ENCODE measurements at regions of chr11 and their contacts with region 1.

Region 1: GRCh38 chr11:65134386-65135253 is at the start of gene SYVN1:
- DNase-seq: peak; percentile 96 to 98 (median 98)
- H3K4me3 ChIP-seq: peak within 1 kb of the TSS; percentile 81 to 97 (median 89)
- H3K27ac ChIP-seq: peak within 1 kb of the TSS; percentile 100
- H3K4me1 ChIP-seq: peaks cover 8 to 40% (median 34%) of the 10 kb centered on the region in 4 experiments
- H3K27me3 ChIP-seq: no peaks in the 10 kb centered on the region

Region 2: GRCh38 chr11:64826578-64827450 is 307.8 kb before region 1 on chr11:
- CTCF ChIA-PET with region 1: no interaction called
- POLR2A ChIA-PET with region 1: no interaction called
- DNase-seq: no peak
- H3K4me3 ChIP-seq: no peak overlapping the region
- H3K27ac ChIP-seq: no peak overlapping the region
- H3K4me1 ChIP-seq: no peaks in the 10 kb centered on the region
- H3K27me3 ChIP-seq: no peaks in the 10 kb centered on the region

Region 3: GRCh38 chr11:65111744-65112414 is 22.7 kb before region 1 on chr11 and contains the start of gene TM7SF2:
- CTCF ChIA-PET with region 1: interaction called, 14 read pairs
- POLR2A ChIA-PET with region 1: interaction called, 26 read pairs
- DNase-seq: peak; percentile 91 to 95 (median 94)
- H3K4me3 ChIP-seq: peak within 1 kb of the TSS; percentile 52 to 80 (median 74)
- H3K27ac ChIP-seq: peak within 1 kb of the TSS in 1 of 2 experiments; percentile 61
- H3K4me1 ChIP-seq: peaks cover 0 to 51% (median 40%) of the 10 kb centered on the region in 4 experiments
- H3K27me3 ChIP-seq: no peaks in the 10 kb centered on the region

Region 4: GRCh38 chr11:65117216-65118096 is 17.2 kb before region 1 on chr11 and contains the start of gene ZNHIT2:
- CTCF ChIA-PET with region 1: interaction called, 15 read pairs
- POLR2A ChIA-PET with region 1: interaction called, 37 read pairs
- DNase-seq: peak; percentile 99 to 100 (median 99)
- H3K4me3 ChIP-seq: peak within 1 kb of the TSS; percentile 50 to 90 (median 88)
- H3K27ac ChIP-seq: peak within 1 kb of the TSS; percentile 68 to 86
- H3K4me1 ChIP-seq: peaks cover 6 to 52% (median 36%) of the 10 kb centered on the region in 4 experiments
- H3K27me3 ChIP-seq: no peaks in the 10 kb centered on the region

Region 5: DNA sequence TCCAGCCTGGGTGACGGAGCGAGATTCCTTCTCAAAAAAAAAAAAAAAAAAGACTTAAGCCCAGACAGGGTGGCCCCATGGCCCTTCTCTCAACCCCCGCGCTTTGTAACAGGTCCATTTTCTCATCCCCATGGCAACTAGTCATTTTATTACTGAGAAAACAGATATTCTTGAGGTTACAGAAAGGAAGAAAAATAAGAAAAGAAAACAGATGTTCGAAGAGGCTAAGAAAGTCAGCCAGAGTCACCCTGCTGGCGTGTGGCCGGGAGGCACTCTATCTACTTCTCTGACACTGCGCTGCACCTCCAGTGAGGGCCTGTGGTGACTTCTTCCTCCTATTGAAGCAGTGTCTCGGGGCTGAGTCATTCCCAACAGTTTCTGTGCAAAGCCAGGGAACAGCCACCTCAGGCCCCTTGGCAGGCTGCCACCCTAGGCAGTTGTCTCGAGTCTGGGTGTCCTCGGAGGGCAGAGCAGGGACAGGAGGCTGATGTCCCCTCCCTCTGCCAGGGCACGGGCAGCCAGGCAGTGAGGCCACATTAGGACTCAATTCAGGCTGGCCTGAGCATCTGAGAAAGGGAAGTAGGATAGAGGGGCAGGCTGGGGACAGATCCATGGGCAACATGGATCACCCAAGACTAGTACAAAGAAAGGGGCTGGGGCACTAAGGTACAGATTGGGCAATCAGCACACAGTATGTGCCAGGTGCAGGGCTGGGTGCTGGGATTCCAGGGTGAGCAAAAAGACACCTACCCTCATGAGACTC is 16.1 kb after region 1 on chr11:
- CTCF ChIA-PET with region 1: interaction called, 55 read pairs
- POLR2A ChIA-PET with region 1: interaction called, 26 read pairs
- DNase-seq: peak; percentile 97 to 99 (median 99)
- H3K4me3 ChIP-seq: peak overlapping the region in 5 of 7 experiments; percentile 5 to 59 (median 45)
- H3K27ac ChIP-seq: peak overlapping the region; percentile 80 to 90
- H3K4me1 ChIP-seq: peaks cover 13 to 46% (median 44%) of the 10 kb centered on the region in 4 experiments
- H3K27me3 ChIP-seq: no peaks in the 10 kb centered on the region

Region 6: GRCh38 chr11:65169164-65169641 is 34.6 kb after region 1 on chr11:
- CTCF ChIA-PET with region 1: interaction called, 25 read pairs
- POLR2A ChIA-PET with region 1: interaction called, 22 read pairs
- DNase-seq: peak; percentile 40 to 91 (median 63)
- H3K4me3 ChIP-seq: no peak overlapping the region
- H3K27ac ChIP-seq: peak overlapping the region in 1 of 2 experiments; percentile 84
- H3K4me1 ChIP-seq: peaks cover 1 to 24% (median 13%) of the 10 kb centered on the region in 4 experiments
- H3K27me3 ChIP-seq: no peaks in the 10 kb centered on the region

Region 7: GRCh38 chr11:65180877-65181568 is 46.4 kb after region 1 on chr11:
- CTCF ChIA-PET with region 1: interaction called, 31 read pairs
- POLR2A ChIA-PET with region 1: interaction called, 44 read pairs
- DNase-seq: peak; percentile 83 to 91 (median 88)
- H3K4me3 ChIP-seq: peak overlapping the region; percentile 28 to 96 (median 81)
- H3K27ac ChIP-seq: peak overlapping the region; percentile 15 to 74
- H3K4me1 ChIP-seq: peaks cover 0 to 28% (median 22%) of the 10 kb centered on the region in 4 experiments
- H3K27me3 ChIP-seq: no peaks in the 10 kb centered on the region

Measured in common myeloid progenitor, CD34-positive (primary cell).